Mucosa of descending colon (tissue), 3 donors: ENCODE measurements at regions of chr2 and their contacts with region 1.

Region 1: DNA sequence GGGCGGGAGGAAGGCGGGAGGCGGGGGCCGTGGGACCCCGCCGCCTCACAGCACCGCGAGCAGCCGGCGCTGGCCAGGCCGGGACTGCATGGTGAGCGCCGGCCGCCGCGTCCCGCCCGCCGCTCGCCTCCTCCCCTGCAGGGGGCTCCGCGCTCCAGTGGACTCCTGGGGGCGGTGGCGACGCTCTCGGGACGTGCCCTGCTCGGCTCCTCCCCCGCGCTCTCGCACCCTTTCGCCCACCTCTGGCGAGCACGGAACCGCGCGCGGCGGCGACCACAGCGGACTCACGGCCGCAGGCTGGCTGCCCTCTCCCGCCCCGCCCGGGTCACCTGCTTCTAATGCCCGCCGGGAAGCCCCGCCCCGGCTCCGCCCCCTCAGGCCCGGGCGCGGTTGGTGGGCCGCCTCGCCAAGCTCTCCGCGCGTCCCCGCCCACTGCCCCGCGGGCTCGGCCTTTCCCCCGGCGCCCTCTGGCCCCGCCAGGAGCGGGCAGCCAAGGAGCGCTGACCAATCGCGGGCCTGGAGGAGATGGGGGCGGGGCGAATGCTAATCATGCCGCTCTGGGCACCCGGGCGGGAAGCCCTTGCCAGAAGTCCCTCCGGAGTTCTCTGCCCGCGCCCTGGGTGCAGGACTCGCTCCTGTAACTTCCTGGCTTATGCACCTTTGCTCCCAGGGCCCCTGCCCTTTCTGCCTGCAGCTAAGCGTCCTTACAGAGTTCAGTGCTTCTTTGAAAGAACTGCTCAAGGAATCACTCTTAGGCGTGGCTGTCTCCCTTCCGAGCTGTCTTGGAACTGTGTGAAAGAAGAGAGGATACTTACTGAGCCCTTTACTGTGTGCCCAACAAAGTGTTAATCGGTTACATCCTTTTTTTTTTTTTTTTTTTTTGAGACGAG is at the start of gene FZD5:
- DNase-seq: peak; percentile 98 to 100 (median 99)
- ATAC-seq: peak; percentile 81
- H3K4me3 ChIP-seq: peak within 1 kb of the TSS; percentile 83
- H3K4me1 ChIP-seq: peaks cover 15% of the 10 kb centered on the region
- CTCF ChIP-seq: peak; percentile 23
- total RNA-seq, gene FZD5: 89.9 to 140 (median 125) TPM

Region 2: GRCh38 chr2:207584952-207585351 is 184.9 kb before region 1 on chr2:
- intact Hi-C with region 1: no loop called
- DNase-seq: no peak
- ATAC-seq: no peak
- H3K4me3 ChIP-seq: no peak overlapping the region
- H3K4me1 ChIP-seq: no peaks in the 10 kb centered on the region
- CTCF ChIP-seq: no peak

Region 3: DNA sequence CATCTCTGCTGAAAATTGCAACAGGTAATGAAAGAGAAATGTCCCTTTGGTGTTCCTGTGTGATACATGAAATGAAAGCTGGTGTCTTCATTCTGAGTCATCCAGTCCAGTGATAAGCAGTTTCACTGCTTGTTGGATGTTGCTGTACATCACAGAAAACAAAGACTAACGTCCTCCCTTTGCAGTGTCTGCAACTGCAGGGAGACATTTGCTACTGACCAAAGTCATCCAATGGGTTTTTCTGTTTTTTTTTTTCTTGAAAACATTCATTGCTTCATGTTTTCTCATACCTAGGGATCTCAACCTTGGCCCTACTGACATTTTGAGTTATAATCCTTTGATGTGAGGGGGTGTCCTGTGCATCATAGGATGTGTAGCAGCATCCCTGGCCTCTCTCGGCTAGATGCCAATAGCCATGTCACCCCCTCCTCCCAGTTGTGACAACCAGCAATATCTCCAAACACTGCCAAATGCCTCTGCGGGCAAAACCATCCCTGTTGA is 63.5 kb after region 1 on chr2:
- intact Hi-C with region 1: loop called in 1 of 2 experiments (anchors 5 kb)
- DNase-seq: peak in 1 of 3 donors; percentile 10
- ATAC-seq: peak; percentile 5
- H3K4me3 ChIP-seq: no peak overlapping the region
- H3K4me1 ChIP-seq: peaks cover 45% of the 10 kb centered on the region
- CTCF ChIP-seq: no peak

Region 4: DNA sequence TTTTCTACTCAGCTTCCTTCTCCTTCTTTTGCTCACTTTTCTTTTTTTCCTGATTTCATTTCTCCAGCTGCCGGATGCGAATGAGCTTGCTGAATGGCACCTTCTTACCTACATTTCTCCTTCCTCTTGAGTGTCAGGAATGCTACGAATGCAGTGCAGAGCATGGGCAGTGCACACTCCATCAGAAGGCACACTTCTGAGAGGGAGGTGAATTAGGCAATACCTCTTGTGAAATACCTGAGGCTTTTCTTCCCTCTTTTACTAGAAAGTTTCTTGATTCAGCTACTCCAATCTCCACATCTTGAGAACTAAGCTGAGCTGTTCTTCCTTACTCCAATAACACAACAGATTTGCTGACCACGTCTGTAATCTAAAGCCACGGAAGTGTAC is 204.4 kb after region 1 on chr2:
- intact Hi-C with region 1: loop called in 1 of 2 experiments (anchors 10 kb)
- DNase-seq: no peak
- ATAC-seq: no peak
- H3K4me3 ChIP-seq: no peak overlapping the region
- H3K4me1 ChIP-seq: peaks cover 16% of the 10 kb centered on the region
- CTCF ChIP-seq: no peak

Region 5: DNA sequence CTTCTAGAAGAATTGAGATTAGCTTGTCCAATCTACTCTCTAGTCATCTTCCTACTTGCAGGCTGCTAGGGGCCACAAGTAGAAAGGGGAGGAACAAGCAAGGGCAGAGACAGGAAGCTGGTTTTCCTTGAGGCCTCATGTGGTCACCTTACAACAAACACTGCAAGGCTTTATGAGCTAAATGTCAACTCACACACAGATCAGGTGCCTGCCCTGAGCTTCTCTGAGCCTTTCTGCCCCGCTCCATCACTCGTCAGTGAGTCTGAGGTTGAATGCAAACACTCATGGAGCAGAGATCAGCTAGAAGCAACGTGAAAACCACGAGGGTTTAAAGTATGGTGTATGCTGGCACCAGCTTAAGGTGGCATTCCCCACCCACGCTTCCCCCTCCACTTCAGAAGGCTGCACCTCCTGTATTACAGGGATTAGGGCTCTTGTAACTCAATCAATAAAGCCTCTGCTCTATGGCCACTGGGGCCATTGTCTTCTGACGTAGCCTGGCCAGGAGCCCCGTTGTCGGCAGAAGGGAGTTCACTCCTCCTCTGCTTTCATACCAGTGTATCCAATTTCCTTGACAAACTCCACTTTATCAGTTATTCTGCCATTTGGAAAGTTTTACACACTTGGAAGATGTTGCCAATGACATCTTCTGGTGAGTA is 365.2 kb after region 1 on chr2:
- intact Hi-C with region 1: no loop called
- DNase-seq: no peak
- ATAC-seq: no peak
- H3K4me3 ChIP-seq: no peak overlapping the region
- H3K4me1 ChIP-seq: peaks cover 7% of the 10 kb centered on the region
- CTCF ChIP-seq: no peak